ENCODE measurements at regions of chr17 and their contacts with region 1.

Region 1: DNA sequence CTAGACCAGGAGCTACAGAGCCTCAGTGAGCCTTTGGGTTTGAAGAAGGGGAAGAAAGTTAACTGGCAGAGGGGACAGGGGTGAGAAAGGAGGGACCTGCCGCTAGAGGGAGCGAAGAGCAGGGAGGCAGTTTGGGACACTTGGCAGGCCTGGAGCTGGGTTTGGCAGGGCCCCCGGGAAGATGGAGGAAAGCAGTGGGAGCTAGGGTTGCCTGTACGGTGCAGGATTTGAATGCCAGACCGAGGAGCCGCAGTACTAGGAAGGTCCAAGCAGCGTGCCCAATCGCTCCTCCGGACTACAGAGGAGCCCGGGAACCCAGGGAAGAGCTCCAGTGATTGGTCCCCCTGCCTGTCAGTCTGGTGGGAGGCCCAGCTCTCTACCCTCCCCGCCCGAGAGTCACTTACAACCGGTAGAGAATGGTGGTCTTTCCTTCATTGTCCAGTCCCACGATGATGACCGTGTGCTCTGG is 1.3 kb downstream of the ARL5C start:
- DNase-seq: peak; percentile 53 to 90 (median 74)
- ATAC-seq: peak; percentile 89
- H3K4me3 ChIP-seq: peak overlapping the region; percentile 68 to 95
- H3K4me3 Mint-ChIP-seq: peak overlapping the region; percentile 91
- H3K27ac ChIP-seq: peak overlapping the region in 1 of 2 experiments; percentile 21
- H3K27ac Mint-ChIP-seq: peak overlapping the region; percentile 67
- H3K4me1 ChIP-seq: peaks cover 20% of the 10 kb centered on the region
- H3K4me1 Mint-ChIP-seq: peaks cover 33% of the 10 kb centered on the region
- H3K27me3 ChIP-seq: peaks cover 0 to 3% of the 10 kb centered on the region in 2 experiments
- H3K27me3 Mint-ChIP-seq: peaks cover 11% of the 10 kb centered on the region
- CTCF ChIP-seq: peak; percentile 80

Region 2: DNA sequence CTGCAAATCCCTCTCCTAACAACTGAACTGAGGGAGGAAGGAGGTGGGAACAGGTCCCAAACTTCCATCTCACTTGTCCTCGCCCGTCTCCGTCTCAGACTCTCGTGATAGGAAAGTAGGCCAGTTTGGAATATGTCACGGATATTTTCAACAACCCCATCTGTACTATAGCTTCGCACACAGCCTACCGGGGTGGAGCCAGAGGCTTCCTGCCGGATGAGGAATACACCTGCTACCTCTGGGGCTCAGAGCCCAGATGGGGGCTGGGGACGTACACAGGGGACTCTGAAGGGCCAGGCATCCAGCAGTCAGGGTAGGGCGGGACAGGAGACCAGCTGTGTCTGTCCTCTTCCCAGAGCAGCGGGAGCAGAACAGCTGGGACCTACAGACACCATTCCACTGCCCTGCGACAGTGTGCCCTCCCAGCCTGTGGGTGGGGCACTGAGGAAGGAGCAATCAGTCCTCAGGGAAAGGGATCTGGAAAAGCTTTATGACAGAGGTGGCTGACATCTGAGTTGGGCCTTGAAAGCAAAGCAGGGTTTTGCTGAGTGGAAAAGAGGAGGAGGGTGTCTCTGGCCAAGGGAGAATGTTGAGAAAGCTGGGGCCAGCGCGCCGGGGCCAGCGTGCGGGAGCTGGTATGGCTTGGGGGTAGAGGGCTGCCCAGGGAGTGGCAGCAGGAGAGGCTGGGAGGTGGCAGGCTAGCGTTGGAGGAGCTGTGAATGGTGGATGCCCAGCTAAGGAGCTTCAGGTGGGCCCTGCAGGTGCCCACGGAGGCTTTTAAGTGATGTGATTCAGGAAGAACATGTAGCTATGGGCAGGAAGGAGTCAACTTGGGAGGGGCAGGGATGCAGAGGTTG is 547.5 kb before region 1 on chr17:
- CTCF ChIA-PET with region 1: no interaction called
- POLR2A ChIA-PET with region 1: no interaction called
- intact Hi-C with region 1: no loop called
- DNase-seq: no peak
- ATAC-seq: no peak
- H3K4me3 ChIP-seq: no peak overlapping the region
- H3K4me3 Mint-ChIP-seq: no peak overlapping the region
- H3K27ac ChIP-seq: no peak overlapping the region
- H3K27ac Mint-ChIP-seq: no peak overlapping the region
- H3K4me1 ChIP-seq: no peaks in the 10 kb centered on the region
- H3K4me1 Mint-ChIP-seq: no peaks in the 10 kb centered on the region
- H3K27me3 ChIP-seq: peaks cover 0 to 6% of the 10 kb centered on the region in 2 experiments
- H3K27me3 Mint-ChIP-seq: peaks cover 36% of the 10 kb centered on the region
- CTCF ChIP-seq: no peak

Region 3: DNA sequence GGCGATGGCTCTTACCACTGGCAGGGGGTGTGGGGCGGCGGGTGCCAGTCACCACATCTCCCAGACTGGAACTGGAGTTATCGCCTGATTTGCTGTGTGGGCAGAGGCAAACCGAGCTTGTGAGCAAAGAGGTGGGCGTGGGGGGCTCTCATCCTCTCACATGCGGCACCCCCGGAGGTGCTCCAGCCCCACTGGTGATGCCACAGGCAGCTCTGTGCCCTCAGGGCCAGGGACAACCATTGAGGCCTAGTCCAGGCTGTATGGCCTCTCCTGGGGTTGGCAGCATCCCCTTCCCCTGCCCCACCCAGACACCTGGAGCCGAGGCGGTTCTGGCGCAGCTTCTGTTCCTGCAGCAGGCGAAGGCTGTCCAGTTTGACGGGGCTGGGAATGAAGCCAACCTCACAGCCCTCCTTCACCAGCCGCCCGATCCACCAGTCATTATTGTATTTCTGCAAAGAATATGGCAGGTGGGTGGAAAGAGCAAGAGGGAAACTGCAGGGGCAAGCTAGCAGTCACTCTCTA is 21.8 kb after region 1 on chr17:
- CTCF ChIA-PET with region 1: interaction called, 11 read pairs
- POLR2A ChIA-PET with region 1: no interaction called
- intact Hi-C with region 1: no loop called
- DNase-seq: no peak
- ATAC-seq: no peak
- H3K4me3 ChIP-seq: no peak overlapping the region
- H3K4me3 Mint-ChIP-seq: no peak overlapping the region
- H3K27ac ChIP-seq: no peak overlapping the region
- H3K27ac Mint-ChIP-seq: no peak overlapping the region
- H3K4me1 ChIP-seq: no peaks in the 10 kb centered on the region
- H3K4me1 Mint-ChIP-seq: no peaks in the 10 kb centered on the region
- H3K27me3 ChIP-seq: no peaks in the 10 kb centered on the region
- H3K27me3 Mint-ChIP-seq: no peaks in the 10 kb centered on the region
- CTCF ChIP-seq: no peak